Endothelial cell of umbilical vein (primary cell): ENCODE measurements at regions of chr14 and their contacts with region 1.

Region 1: DNA sequence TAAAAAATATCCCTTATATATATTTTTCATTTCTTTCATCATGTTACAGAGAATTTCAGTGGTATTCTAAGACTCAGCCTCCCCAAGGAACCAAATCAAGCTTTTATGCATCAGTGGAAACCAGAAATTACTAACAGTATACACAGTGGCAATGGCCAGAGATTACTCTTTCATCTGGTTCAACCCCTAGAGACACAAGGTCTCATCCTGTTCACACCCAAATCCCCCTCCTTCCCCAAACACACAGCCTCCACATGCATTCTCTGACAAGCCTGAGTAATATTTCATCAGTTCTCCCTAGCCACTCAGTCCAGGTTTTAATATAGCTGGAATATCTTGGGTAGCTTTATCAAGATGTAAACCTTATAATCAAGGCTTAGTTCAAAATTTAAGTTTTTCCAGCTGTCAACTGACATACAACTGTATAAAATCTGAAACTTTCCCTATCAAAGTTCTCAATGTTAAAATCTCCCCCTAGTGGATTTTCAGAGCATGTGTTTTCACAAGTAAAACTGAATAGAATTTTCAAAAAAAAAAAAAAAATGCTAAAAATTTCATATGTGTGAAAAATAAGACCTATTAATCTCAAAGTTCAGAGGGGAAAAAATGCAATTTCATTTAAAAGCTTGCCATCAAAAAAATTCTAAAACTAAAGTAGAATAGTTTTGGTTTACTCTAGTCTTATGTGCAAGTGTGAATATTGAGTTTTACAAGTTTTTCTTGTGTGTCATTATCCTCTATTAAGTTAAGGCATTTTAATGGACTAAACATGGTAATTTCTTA is 10.5 kb upstream of the SSTR1 start:
- DNase-seq: peak; percentile 23
- H3K4me3 ChIP-seq: no peak overlapping the region
- H3K27ac ChIP-seq: no peak overlapping the region
- H3K4me1 ChIP-seq: no peaks in the 10 kb centered on the region
- H3K27me3 ChIP-seq: no peaks in the 10 kb centered on the region
- CTCF ChIP-seq: peak; percentile 12 to 35
- POLR2A ChIP-seq: no peak

Region 2: DNA sequence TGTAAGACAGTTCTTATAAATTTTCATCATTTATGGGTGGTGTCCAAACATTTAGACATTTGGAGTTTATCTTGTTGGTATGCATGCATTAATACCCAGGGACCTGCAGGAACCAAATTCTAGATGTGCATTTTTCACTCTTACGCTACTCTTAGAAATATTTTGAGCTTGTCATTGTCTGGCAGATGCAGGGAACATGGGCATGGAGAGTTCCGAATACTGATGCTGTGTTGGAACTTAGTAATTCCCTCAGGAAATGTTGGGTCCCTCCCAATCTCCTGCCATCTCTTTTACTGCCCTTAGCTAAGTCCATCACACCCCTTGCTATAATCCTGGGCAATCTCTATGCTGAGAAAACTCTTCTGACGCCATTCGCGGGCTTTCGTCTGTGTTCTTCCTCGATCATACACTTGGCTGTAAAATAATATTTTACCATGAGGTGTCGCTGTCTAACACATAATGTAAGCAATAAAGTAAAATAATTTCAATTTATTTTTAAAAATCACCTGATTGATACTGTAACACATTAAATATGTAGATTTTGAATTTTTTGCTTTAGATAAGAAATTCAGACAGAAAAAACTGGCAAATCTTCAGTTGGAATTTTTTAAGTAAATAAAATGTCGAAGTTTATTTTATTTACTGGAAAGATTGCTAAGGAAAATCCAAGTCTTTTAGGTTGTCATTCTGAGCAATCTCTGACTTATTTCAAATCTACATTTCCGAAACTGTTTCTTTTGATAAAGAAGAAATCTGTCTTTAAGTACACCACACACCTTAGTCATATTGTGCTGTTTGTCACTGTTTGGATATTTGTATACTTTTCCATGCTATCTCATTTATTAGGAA is 293.6 kb before region 1 on chr14:
- CTCF ChIA-PET with region 1: interaction called, 7 read pairs
- POLR2A ChIA-PET with region 1: no interaction called
- dilution Hi-C with region 1: no loop called
- intact Hi-C with region 1: loop called (anchors 1 kb)
- DNase-seq: peak; percentile 64
- H3K4me3 ChIP-seq: no peak overlapping the region
- H3K27ac ChIP-seq: no peak overlapping the region
- H3K4me1 ChIP-seq: peaks cover 3% of the 10 kb centered on the region
- H3K27me3 ChIP-seq: peaks cover 22 to 23% of the 10 kb centered on the region in 2 experiments
- CTCF ChIP-seq: peak; percentile 33 to 45
- POLR2A ChIP-seq: no peak

Region 3: DNA sequence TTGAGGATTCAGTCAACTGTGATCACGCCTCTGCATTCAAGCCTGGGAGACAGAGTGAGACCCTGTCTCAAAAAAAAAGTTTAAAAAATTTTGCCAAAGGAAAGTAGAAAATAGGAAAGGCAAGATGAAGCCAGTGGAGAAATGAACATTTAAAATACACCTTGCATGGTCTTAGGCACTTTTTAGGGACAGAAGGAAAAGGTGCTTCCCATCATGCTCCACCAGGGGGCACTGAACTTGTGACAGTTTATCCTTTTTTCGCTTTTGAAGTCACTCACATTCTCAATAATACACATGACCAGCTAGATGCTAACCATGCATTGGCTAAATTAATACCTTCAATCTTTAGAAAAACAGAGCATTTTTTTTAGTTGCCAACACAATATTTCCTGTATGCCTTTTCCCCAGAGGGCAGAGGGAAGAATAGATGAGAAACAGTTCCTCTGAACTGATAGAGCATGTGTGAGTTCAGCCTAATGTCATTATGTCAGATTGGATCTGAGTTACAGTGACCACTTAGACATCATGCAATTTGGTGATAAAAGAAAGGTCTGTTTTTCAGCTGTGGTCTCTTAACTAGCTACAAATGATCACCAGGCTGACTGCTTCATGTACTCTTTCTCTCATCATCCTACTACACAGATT is 211.2 kb before region 1 on chr14:
- CTCF ChIA-PET with region 1: interaction called, 9 read pairs
- POLR2A ChIA-PET with region 1: no interaction called
- dilution Hi-C with region 1: no loop called
- intact Hi-C with region 1: loop called (anchors 2 kb)
- DNase-seq: peak; percentile 67
- H3K4me3 ChIP-seq: no peak overlapping the region
- H3K27ac ChIP-seq: no peak overlapping the region
- H3K4me1 ChIP-seq: no peaks in the 10 kb centered on the region
- H3K27me3 ChIP-seq: no peaks in the 10 kb centered on the region
- CTCF ChIP-seq: peak; percentile 63 to 83
- POLR2A ChIP-seq: no peak

Region 4: GRCh38 chr14:38171197-38171596 is 26.0 kb before region 1 on chr14:
- CTCF ChIA-PET with region 1: no interaction called
- POLR2A ChIA-PET with region 1: no interaction called
- dilution Hi-C with region 1: no loop called
- intact Hi-C with region 1: no loop called
- DNase-seq: no peak
- H3K4me3 ChIP-seq: no peak overlapping the region
- H3K27ac ChIP-seq: no peak overlapping the region
- H3K4me1 ChIP-seq: no peaks in the 10 kb centered on the region
- H3K27me3 ChIP-seq: no peaks in the 10 kb centered on the region
- CTCF ChIP-seq: no peak
- POLR2A ChIP-seq: no peak

Region 5: DNA sequence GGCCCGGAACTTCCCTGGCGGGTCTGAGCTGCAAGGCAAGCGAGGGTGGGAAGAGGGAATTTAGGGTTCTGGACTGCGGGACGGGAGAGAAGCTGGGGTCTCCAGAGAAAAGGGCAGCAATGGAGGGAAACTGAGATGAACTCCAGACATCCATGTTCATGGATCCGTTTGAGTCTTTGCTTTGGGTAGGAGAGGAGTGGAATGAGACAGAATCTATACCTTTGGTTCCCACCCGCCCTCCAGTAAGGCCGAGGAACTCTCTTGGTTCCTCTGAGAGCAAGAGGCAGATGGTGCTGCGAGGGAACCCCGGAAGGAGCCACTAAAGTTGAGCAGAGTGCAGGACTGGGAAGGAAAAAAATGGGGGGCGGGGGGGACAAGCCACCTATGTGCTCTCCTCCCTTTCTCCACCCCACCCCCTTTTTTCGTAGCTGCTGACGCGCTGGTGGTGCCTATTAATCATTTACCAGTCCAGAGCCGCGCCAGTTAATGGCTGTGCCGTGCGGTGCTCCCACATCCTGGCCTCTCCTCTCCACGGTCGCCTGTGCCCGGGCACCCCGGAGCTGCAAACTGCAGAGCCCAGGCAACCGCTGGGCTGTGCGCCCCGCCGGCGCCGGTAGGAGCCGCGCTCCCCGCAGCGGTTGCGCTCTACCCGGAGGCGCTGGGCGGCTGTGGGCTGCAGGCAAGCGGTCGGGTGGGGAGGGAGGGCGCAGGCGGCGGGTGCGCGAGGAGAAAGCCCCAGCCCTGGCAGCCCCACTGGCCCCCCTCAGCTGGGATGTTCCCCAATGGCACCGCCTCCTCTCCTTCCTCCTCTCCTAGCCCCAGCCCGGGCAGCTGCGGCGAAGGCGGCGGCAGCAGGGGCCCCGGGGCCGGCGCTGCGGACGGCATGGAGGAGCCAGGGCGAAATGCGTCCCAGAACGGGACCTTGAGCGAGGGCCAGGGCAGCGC is 11.7 kb after region 1 on chr14:
- CTCF ChIA-PET with region 1: interaction called, 10 read pairs
- POLR2A ChIA-PET with region 1: no interaction called
- dilution Hi-C with region 1: no loop called
- intact Hi-C with region 1: no loop called
- DNase-seq: peak; percentile 47
- H3K4me3 ChIP-seq: peak overlapping the region; percentile 34 to 58 (median 44)
- H3K27ac ChIP-seq: no peak overlapping the region
- H3K4me1 ChIP-seq: peaks cover 36% of the 10 kb centered on the region
- H3K27me3 ChIP-seq: no peaks in the 10 kb centered on the region
- CTCF ChIP-seq: peak in 1 of 2 donors; percentile 48
- POLR2A ChIP-seq: no peak